Activated CD4-positive, alpha-beta T cell treated with anti-CD3 and anti-CD28 coated beads, Interleukin-2, amount 10 ng/mL, durations not matched to agents 24 days and 14 days (primary cell): ENCODE measurements at regions of chr19 and their contacts with region 1.

Region 1: GRCh38 chr19:40305403-40305802 is 20.3 kb upstream of the AKT2 start:
- DNase-seq: peak; percentile 92
- H3K4me3 Mint-ChIP-seq: no peak overlapping the region
- H3K27ac Mint-ChIP-seq: no peak overlapping the region
- H3K4me1 Mint-ChIP-seq: peaks cover 3% of the 10 kb centered on the region
- H3K27me3 Mint-ChIP-seq: peaks cover 1% of the 10 kb centered on the region

Region 2: GRCh38 chr19:40337594-40337993 is 32.2 kb after region 1 on chr19:
- intact Hi-C with region 1: no loop called
- DNase-seq: no peak
- H3K4me3 Mint-ChIP-seq: no peak overlapping the region
- H3K27ac Mint-ChIP-seq: no peak overlapping the region
- H3K4me1 Mint-ChIP-seq: peaks cover 4% of the 10 kb centered on the region
- H3K27me3 Mint-ChIP-seq: no peaks in the 10 kb centered on the region

Region 3: DNA sequence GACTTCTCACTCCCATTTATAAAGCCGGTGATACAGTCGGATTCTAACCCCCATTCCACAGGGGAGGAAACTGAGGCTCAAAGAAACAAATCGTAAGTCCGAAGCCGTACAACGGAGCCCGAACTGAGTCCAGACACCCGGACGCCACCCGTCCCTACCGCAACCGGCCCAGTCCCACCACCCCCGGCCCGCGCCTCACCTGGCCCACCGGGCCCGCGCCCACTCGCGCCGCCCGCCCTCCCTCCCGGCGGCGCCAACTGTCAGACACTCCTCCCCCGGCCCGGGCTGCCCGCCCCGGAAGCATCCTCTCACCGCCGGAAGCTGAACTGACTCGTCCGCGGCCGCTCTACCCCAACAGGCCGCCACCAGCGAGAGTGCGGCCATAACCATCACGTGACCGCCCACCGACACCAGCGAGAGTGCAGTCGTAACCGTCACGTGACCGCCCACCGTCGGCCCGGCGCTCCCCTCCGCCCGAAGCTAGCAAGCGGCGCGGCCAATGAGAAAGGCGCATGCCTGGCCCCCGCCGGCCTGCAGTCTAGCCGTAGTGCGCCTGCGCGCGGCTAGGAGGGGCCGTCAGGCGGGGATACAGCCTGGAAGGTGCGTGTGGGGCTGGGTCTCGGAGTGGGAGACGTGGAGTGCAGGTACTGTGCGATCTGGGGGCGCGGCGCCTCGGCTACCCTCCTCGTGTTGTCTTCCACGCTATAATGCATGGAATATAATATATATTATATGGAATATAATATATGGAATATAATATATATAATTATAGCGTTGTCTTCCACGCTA is 42.9 kb after region 1 on chr19 and contains the starts of genes C19orf47 and PLD3:
- intact Hi-C with region 1: no loop called
- DNase-seq: peak; percentile 100
- H3K4me3 Mint-ChIP-seq: peak within 1 kb of the TSS; percentile 88
- H3K27ac Mint-ChIP-seq: peak within 1 kb of the TSS; percentile 87
- H3K4me1 Mint-ChIP-seq: peaks cover 23% of the 10 kb centered on the region
- H3K27me3 Mint-ChIP-seq: peaks cover 2% of the 10 kb centered on the region
- total RNA-seq, gene C19orf47: 24.4 and 28.9 TPM in 2 replicates
- total RNA-seq, gene PLD3: 49.4 and 52.2 TPM in 2 replicates

Region 4: GRCh38 chr19:40633207-40633606 is 327.8 kb after region 1 on chr19:
- intact Hi-C with region 1: loop called (anchors 1 kb)
- DNase-seq: no peak
- H3K4me3 Mint-ChIP-seq: no peak overlapping the region
- H3K27ac Mint-ChIP-seq: no peak overlapping the region
- H3K4me1 Mint-ChIP-seq: peaks cover 11% of the 10 kb centered on the region
- H3K27me3 Mint-ChIP-seq: peaks cover 12% of the 10 kb centered on the region